Cardiac septum (tissue), 1 donor: ENCODE measurements at regions of chr19 and their contacts with region 1.

Region 1: GRCh38 chr19:14571695-14572490 is at the start of gene NDUFB7:
- DNase-seq: peak; percentile 96
- total RNA-seq, gene NDUFB7: 382 TPM

Region 2: GRCh38 chr19:14689598-14690503 is 118.0 kb after region 1 on chr19 and contains the start of gene ZNF333:
- intact Hi-C with region 1: loop called (anchors 5 kb)
- DNase-seq: peak; percentile 98
- total RNA-seq, gene ZNF333: 10.5 TPM

Region 3: DNA sequence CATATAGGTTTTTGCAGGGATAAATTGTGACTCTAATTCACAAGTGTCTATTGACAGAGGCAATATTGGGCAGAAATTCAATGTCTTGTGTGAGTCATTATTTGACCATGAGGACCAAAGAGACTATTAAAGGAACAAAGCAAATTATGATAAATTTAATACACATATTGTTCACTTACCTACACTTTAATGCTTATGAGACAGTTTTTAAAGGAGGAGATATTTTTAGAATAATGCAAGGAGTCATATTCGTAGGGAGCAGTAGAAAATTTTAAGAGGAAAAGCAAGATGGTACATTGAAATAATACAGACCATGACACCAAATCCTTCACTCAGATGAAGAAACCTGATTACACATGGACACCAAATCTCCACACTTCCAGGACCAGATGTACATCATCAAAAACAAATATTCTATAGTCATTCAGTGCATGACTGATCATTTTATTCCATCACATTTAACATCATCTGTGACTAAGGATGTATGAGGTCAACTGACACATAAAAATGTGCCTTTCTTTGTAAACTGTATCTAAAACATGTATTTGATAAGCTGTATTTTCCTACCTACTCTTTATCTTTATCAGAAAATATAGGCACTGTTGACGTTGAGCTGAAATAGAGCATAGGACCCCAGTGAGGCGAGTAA is 318.2 kb after region 1 on chr19:
- intact Hi-C with region 1: loop called (anchors 2 kb)
- DNase-seq: no peak